ENCODE measurements at regions of chr12 and their contacts with region 1.

Region 1: DNA sequence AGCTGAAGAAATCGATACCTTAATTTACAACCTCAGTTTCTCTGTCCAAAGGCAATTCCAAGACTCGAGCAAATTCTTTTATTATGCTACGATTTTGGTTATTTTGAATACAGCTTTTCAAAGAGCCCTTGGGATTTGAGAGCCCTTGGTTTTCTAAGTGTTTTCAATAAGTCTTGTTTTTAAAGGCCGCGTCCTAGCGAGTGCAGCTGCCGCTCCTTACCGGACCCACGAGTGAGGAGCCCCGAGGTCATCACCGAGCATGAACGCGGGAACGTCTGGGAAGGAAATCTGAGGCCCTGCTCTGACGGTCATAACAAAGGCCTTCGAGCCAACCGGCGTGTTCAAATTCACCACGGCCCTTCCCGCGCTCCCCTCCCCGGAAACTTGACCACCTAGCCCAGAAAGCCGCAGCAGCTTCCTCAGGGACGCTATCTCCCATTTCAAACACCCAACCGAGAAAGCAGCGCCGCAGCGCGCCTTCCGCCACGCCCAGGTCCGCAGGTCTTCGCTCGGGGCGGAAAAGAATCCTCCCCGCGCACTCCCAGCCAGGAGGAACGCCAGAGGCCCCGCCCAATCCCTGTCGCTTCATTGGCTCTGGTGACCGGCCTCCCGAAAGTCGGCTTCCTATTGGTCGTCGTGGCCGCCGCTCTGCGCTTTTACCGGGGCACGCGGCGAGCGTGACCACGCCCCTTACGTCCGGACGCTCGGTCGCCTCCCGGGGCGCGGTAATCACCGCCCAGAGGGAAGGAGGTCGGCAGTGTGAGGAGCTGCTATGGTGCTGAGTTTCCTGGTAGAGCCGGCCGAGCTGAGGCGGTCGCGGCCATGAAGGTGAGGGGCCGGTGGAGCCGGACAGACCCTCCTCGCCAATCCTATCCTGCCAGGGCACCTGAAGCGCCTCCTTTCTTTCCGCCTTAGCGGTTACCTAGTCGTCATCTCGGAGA is at the start of gene RNF34:
- DNase-seq: peak; percentile 97
- ATAC-seq: peak; percentile 96
- H3K4me3 ChIP-seq: peak within 1 kb of the TSS; percentile 71 to 84 (median 83)
- H3K27ac ChIP-seq: peak within 1 kb of the TSS; percentile 79
- H3K4me1 ChIP-seq: peaks cover 42% of the 10 kb centered on the region
- H3K27me3 ChIP-seq: no peaks in the 10 kb centered on the region; a peak in 1 of 5 replicates
- CTCF ChIP-seq: peak; percentile 24; the same call in 1 of the 2 replicates
- EP300 ChIP-seq: no peak
- POLR2A ChIP-seq: peak; percentile 94 to 98
- RAD21 ChIP-seq: peak; percentile 24; the same call in 1 of the 2 replicates
- total RNA-seq, gene RNF34: 53.2 and 68.2 TPM in 2 replicates

Region 2: GRCh38 chr12:121227300-121227699 is 172.4 kb before region 1 on chr12:
- CTCF ChIA-PET with region 1: no interaction called
- POLR2A ChIA-PET with region 1: no interaction called
- in situ Hi-C with region 1: no loop called
- intact Hi-C with region 1: no loop called
- DNase-seq: peak; percentile 63
- ATAC-seq: peak; percentile 75
- H3K4me3 ChIP-seq: peak overlapping the region in 1 of 3 experiments; percentile 27; a peak in 1 of 6 replicates
- H3K27ac ChIP-seq: peak overlapping the region; percentile 74
- H3K4me1 ChIP-seq: peaks cover 31% of the 10 kb centered on the region
- H3K27me3 ChIP-seq: no peaks in the 10 kb centered on the region
- CTCF ChIP-seq: no peak; the same call in 1 of the 2 replicates
- EP300 ChIP-seq: no peak
- POLR2A ChIP-seq: no peak
- RAD21 ChIP-seq: no peak

Region 3: GRCh38 chr12:121358073-121358472 is 41.6 kb before region 1 on chr12:
- CTCF ChIA-PET with region 1: no interaction called
- POLR2A ChIA-PET with region 1: interaction called, 37 read pairs
- in situ Hi-C with region 1: no loop called
- intact Hi-C with region 1: no loop called
- DNase-seq: peak; percentile 20
- ATAC-seq: peak; percentile 53
- H3K4me3 ChIP-seq: no peak overlapping the region
- H3K27ac ChIP-seq: no peak overlapping the region
- H3K4me1 ChIP-seq: peaks cover 49% of the 10 kb centered on the region
- H3K27me3 ChIP-seq: no peaks in the 10 kb centered on the region
- CTCF ChIP-seq: no peak
- EP300 ChIP-seq: no peak
- POLR2A ChIP-seq: no peak
- RAD21 ChIP-seq: no peak

Region 4: GRCh38 chr12:121376754-121377697 is 22.6 kb before region 1 on chr12:
- CTCF ChIA-PET with region 1: no interaction called
- POLR2A ChIA-PET with region 1: interaction called, 18 read pairs
- in situ Hi-C with region 1: no loop called
- intact Hi-C with region 1: no loop called
- DNase-seq: peak; percentile 69
- ATAC-seq: peak; percentile 77
- H3K4me3 ChIP-seq: peak overlapping the region in 1 of 3 experiments; percentile 34; a peak in 1 of 6 replicates
- H3K27ac ChIP-seq: peak overlapping the region; percentile 63
- H3K4me1 ChIP-seq: peaks cover 31% of the 10 kb centered on the region
- H3K27me3 ChIP-seq: no peaks in the 10 kb centered on the region
- CTCF ChIP-seq: no peak
- EP300 ChIP-seq: peak in 1 of 2 experiments; percentile 35; a peak in 2 of 4 replicates
- POLR2A ChIP-seq: no peak
- RAD21 ChIP-seq: no peak